Activated CD8-positive, alpha-beta memory T cell treated with anti-CD3 and anti-CD28 coated beads, Interleukin-2, amount 10 ng/mL, durations not matched to agents 7 days and 5 days (primary cell): ENCODE measurements at regions of chr22 and their contacts with region 1.

Region 1: GRCh38 chr22:36379593-36380361 is 8.0 kb downstream of the MYH9 start:
- DNase-seq: peak; percentile 81
- ATAC-seq: peak; percentile 51
- H3K4me3 Mint-ChIP-seq: peak overlapping the region; percentile 70
- H3K27ac Mint-ChIP-seq: peak overlapping the region; percentile 93
- H3K4me1 Mint-ChIP-seq: peaks cover 92% of the 10 kb centered on the region
- H3K27me3 Mint-ChIP-seq: no peaks in the 10 kb centered on the region

Region 2: DNA sequence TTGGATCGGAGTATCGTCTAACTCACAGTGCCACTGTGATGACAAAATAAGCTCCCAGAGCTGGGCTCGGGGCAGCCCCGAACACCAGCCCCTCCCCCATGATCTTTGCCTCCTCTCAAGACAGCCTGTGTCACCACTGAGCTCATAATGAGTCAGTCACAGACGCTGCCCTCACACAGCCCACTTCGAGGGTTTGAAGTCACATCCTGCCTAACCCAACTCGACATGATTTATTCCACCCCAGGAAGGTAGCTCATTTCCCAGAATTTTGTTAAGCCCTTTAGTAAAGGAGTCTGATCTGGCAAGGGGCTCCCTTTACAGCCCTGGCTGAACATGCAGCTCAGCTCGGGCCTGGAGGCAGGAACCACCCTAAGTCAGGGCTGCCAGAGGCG is 14.8 kb before region 1 on chr22:
- CTCF ChIA-PET with region 1: interaction called, 47 read pairs
- DNase-seq: peak; percentile 96
- ATAC-seq: peak; percentile 87
- H3K4me3 Mint-ChIP-seq: peak overlapping the region; percentile 45
- H3K27ac Mint-ChIP-seq: peak overlapping the region; percentile 85
- H3K4me1 Mint-ChIP-seq: peaks cover 95% of the 10 kb centered on the region
- H3K27me3 Mint-ChIP-seq: no peaks in the 10 kb centered on the region